Endothelial cell of umbilical vein (primary cell): ENCODE measurements at regions of chr22 and their contacts with region 1.

Region 1: GRCh38 chr22:38114484-38115398 is 4.3 kb upstream of the BAIAP2L2 start:
- DNase-seq: peak; percentile 77
- H3K4me3 ChIP-seq: no peak overlapping the region
- H3K27ac ChIP-seq: no peak overlapping the region
- H3K4me1 ChIP-seq: no peaks in the 10 kb centered on the region
- H3K27me3 ChIP-seq: no peaks in the 10 kb centered on the region
- CTCF ChIP-seq: peak; percentile 96 to 99
- POLR2A ChIP-seq: no peak

Region 2: GRCh38 chr22:37896181-37896592 is 218.6 kb before region 1 on chr22:
- CTCF ChIA-PET with region 1: no interaction called
- POLR2A ChIA-PET with region 1: no interaction called
- dilution Hi-C with region 1: no loop called
- intact Hi-C with region 1: no loop called
- DNase-seq: peak; percentile 48
- H3K4me3 ChIP-seq: no peak overlapping the region
- H3K27ac ChIP-seq: peak overlapping the region; percentile 40
- H3K4me1 ChIP-seq: peaks cover 16% of the 10 kb centered on the region
- H3K27me3 ChIP-seq: no peaks in the 10 kb centered on the region
- CTCF ChIP-seq: no peak
- POLR2A ChIP-seq: no peak

Region 3: DNA sequence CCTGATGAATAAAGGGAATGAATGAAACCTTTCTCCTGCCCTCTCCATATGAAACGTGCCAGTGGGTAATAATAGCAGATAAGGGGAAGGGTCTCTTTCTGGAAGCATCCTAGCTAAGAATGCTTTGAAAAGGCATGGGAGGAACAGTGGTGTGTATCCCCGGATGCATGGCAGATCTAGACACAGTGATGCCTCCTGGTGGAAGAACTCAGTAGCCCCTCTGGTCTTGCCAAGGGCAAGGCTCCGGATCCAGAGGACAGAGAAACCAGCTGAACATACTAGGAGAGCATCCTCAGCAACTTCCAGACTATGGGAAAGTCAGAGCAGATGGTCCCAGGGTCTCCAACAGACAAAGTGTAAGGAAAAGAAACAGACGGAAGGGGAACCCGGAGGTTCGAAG is 10.7 kb before region 1 on chr22:
- CTCF ChIA-PET with region 1: interaction called, 25 read pairs
- POLR2A ChIA-PET with region 1: no interaction called
- dilution Hi-C with region 1: no loop called
- intact Hi-C with region 1: no loop called
- DNase-seq: no peak
- H3K4me3 ChIP-seq: no peak overlapping the region
- H3K27ac ChIP-seq: no peak overlapping the region
- H3K4me1 ChIP-seq: no peaks in the 10 kb centered on the region
- H3K27me3 ChIP-seq: no peaks in the 10 kb centered on the region
- CTCF ChIP-seq: peak; percentile 16 to 34
- POLR2A ChIP-seq: no peak

Region 4: GRCh38 chr22:38143036-38143697 is 28.4 kb after region 1 on chr22:
- CTCF ChIA-PET with region 1: interaction called, 23 read pairs
- POLR2A ChIA-PET with region 1: no interaction called
- dilution Hi-C with region 1: no loop called
- intact Hi-C with region 1: no loop called
- DNase-seq: peak; percentile 16
- H3K4me3 ChIP-seq: no peak overlapping the region
- H3K27ac ChIP-seq: no peak overlapping the region
- H3K4me1 ChIP-seq: peaks cover 7% of the 10 kb centered on the region
- H3K27me3 ChIP-seq: no peaks in the 10 kb centered on the region
- CTCF ChIP-seq: no peak
- POLR2A ChIP-seq: no peak

Region 5: DNA sequence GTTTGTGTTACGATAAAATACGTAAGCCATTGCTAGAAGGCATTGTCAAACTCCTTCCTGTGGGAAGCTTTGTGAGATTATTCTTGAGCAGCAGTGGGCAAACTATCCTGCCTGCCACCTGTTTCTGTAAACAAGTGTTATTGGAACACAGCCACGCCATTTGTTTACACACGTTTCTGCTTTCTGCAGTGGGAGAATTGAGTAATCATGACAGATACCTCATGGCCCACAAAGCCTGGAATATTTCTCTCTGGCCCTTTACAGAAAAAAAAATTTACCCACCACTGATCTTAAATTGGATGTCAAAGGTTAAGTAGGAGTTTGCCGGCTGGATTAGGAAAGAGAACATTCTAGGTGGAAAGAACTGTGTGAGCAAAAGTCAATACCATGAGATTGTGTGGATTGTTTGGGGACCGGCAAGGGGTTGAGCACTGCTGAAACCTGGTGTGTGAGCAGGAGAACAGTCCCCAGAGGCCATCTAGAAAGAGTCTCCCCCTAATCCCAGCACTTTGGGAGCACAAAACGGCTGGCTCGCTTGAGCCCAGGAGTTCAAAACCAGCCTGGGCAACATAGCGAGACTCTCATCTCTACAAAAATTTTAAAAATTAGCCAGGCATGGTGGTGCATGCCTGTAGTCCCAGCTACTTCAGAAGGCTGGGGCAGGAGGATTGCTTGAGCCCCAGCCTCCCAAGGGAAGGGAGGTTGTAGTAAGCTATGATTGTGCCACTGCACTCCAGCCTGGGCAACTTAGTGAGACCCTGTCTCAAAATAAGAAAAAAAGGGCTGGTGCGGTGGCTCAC is 72.9 kb after region 1 on chr22:
- CTCF ChIA-PET with region 1: interaction called, 14 read pairs
- POLR2A ChIA-PET with region 1: no interaction called
- dilution Hi-C with region 1: no loop called
- intact Hi-C with region 1: no loop called
- DNase-seq: peak; percentile 75
- H3K4me3 ChIP-seq: no peak overlapping the region
- H3K27ac ChIP-seq: no peak overlapping the region
- H3K4me1 ChIP-seq: peaks cover 10% of the 10 kb centered on the region
- H3K27me3 ChIP-seq: no peaks in the 10 kb centered on the region
- CTCF ChIP-seq: no peak
- POLR2A ChIP-seq: no peak

Region 6: GRCh38 chr22:38201710-38202436 is 87.1 kb after region 1 on chr22 and contains the start of gene MAFF:
- CTCF ChIA-PET with region 1: interaction called, 42 read pairs
- POLR2A ChIA-PET with region 1: interaction called, 6 read pairs
- dilution Hi-C with region 1: no loop called
- intact Hi-C with region 1: loop called (anchors 1 kb)
- DNase-seq: peak; percentile 97
- H3K4me3 ChIP-seq: peak within 1 kb of the TSS; percentile 70 to 92 (median 87)
- H3K27ac ChIP-seq: peak within 1 kb of the TSS; percentile 92
- H3K4me1 ChIP-seq: peaks cover 24% of the 10 kb centered on the region
- H3K27me3 ChIP-seq: no peaks in the 10 kb centered on the region
- CTCF ChIP-seq: no peak
- POLR2A ChIP-seq: peak; percentile 93
- total RNA-seq, gene MAFF: 59.5 and 61.2 TPM in 2 replicates

Region 7: GRCh38 chr22:38230108-38230825 is 115.5 kb after region 1 on chr22:
- CTCF ChIA-PET with region 1: interaction called, 15 read pairs
- POLR2A ChIA-PET with region 1: no interaction called
- dilution Hi-C with region 1: no loop called
- intact Hi-C with region 1: loop called (anchors 1 kb)
- DNase-seq: peak; percentile 85
- H3K4me3 ChIP-seq: no peak overlapping the region
- H3K27ac ChIP-seq: peak overlapping the region; percentile 77
- H3K4me1 ChIP-seq: peaks cover 41% of the 10 kb centered on the region
- H3K27me3 ChIP-seq: no peaks in the 10 kb centered on the region
- CTCF ChIP-seq: peak; percentile 59 to 70
- POLR2A ChIP-seq: no peak